Breast epithelium (tissue), 4 donors: ENCODE measurements at regions of chr10 and their contacts with region 1.

Region 1: GRCh38 chr10:44206127-44206818 is 178.6 kb downstream of the CXCL12 start:
- DNase-seq: no peak
- H3K4me3 ChIP-seq: no peak overlapping the region
- H3K27ac ChIP-seq: no peak overlapping the region
- H3K4me1 ChIP-seq: no peaks in the 10 kb centered on the region
- H3K27me3 ChIP-seq: no peaks in the 10 kb centered on the region
- CTCF ChIP-seq: no peak
- POLR2A ChIP-seq: no peak

Region 2: GRCh38 chr10:43491855-43492254 is 714.4 kb before region 1 on chr10:
- intact Hi-C with region 1: no loop called
- DNase-seq: no peak
- H3K4me3 ChIP-seq: no peak overlapping the region
- H3K27ac ChIP-seq: no peak overlapping the region
- H3K4me1 ChIP-seq: no peaks in the 10 kb centered on the region
- H3K27me3 ChIP-seq: no peaks in the 10 kb centered on the region
- CTCF ChIP-seq: no peak
- POLR2A ChIP-seq: no peak

Region 3: DNA sequence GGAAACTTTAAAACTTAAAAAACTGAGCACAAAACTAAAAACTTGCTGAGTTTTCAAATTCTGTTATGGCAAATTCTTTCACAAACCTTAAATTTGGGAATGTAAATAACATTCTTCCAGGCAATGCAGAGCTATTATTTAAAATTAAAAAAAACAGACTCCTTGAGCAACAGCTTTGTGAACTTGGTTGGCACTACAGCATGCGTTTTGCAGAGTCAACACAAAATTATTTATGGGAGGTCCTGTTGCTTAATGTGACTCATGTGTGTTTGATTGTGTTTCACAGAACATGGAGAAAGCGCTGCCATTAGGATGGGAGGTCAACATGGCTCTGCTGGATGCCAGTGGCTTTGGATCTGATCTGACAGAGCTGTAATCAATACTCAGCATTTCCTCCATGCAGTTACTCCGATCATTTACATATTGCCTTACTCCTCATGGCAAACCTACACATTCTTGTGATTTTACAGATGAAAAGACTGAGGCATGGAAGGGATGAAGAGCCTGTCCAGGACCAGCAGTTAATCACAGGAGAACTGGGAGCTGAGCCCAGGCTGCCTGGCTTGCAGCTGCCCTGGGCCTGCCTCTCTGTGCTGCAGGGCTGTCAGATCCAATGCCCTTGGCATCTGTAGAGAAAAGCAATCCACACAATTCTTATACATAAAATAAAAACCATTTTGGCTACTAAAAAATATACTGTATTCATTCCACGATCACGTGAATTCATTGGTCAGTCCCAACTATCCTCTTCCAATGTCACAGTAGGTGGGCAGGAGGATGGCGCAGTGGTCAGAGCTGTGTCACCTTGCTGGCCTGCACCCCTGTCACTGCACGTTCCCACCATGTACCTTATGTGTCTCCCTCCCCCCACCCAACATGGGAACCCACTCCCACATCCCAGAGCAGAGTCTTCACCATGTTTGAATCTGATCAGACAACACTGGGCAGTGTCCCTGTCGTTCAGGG is 22.3 kb before region 1 on chr10:
- intact Hi-C with region 1: loop called (anchors 1 kb)
- DNase-seq: no peak
- H3K4me3 ChIP-seq: no peak overlapping the region
- H3K27ac ChIP-seq: no peak overlapping the region
- H3K4me1 ChIP-seq: peaks cover 0 to 4% of the 10 kb centered on the region in 2 donors
- H3K27me3 ChIP-seq: no peaks in the 10 kb centered on the region
- CTCF ChIP-seq: no peak
- POLR2A ChIP-seq: no peak

Region 4: DNA sequence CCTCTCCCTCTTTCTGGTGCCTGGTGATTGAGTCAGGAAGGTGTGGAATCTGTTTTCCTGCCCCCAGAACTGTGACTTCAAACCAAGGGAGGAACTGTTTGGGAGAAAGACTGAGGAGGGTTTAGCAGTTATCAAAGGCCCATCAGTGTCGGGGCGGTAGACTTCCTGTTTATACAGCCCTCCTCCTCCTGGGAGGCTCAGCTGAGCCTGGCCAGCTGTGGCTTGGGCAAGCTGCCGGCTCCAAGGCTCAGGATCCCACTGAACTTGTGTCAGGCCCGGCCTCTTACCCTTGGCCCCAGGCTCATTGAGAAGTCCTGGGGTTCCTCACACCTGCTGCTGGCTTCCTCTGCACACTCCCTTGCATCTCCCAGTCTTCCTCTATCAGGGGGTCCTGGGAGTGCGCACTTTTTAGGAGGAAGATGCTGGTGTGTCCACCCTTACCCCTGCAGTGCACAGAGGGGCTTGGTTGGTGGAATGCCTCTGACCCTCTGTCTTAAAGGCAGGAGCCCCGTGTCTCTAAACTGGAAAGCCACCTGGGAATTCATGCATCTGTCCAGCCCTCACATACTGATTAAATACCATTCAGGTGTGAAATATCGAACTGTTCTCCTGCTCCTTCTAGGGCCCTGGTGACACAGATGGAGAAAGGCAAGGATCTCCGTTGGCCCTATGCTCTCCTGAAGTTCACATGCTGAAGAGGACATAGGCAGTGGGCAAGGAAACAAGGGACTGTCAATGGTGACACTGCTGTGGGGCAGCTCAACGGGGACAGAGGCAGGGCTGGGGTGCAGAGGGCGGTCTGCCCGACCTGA is 146.2 kb after region 1 on chr10:
- intact Hi-C with region 1: no loop called
- DNase-seq: peak in 1 of 2 donors; percentile 31
- H3K4me3 ChIP-seq: no peak overlapping the region
- H3K27ac ChIP-seq: peak overlapping the region in 1 of 2 donors; percentile 5
- H3K4me1 ChIP-seq: no peaks in the 10 kb centered on the region
- H3K27me3 ChIP-seq: no peaks in the 10 kb centered on the region
- CTCF ChIP-seq: no peak
- POLR2A ChIP-seq: no peak

Region 5: DNA sequence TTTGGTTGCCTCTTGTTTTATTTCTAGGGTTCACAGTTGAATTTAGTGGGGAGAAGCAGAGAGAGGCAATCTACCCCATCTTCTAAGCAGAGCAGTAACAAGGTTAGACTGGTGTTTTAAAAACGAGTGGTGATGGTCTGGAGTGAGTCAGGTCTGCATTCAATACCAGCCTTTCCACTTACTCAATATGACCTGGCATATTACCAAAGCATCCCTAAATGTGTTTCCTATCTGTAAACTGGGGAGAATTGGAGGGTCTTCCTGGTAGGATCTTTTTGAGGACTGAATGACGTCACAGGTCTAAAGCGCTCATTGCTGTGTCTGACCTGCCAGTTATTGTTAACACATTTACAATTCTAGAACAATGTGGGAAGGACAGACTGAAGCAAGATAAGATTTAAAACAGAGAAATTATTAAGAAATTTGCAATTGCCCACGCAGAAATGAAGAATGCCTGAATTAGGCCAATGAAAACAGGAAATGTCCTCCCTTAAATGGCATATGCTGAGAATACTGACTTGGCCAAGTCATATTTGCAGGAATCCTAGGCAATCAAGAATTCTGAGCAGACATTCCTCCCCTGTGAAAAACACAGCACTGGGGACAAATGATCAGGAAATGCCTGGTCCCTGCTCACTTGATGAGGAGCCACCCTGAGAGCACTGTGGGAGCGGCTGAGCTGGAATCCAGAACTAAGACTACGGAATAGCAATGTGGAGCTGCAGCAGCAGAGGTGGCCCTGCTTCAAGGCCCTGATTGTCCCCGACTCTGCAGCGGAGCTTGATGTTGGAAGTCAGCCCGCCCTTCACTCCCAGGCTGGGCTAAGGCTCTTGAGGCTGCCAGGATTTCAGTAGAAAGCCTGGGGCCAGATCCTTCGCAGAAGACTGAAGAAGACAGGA is 363.2 kb after region 1 on chr10:
- intact Hi-C with region 1: no loop called
- DNase-seq: no peak
- H3K4me3 ChIP-seq: peak overlapping the region in 1 of 3 donors; percentile 37
- H3K27ac ChIP-seq: peak overlapping the region; percentile 43 to 77
- H3K4me1 ChIP-seq: no peaks in the 10 kb centered on the region
- H3K27me3 ChIP-seq: no peaks in the 10 kb centered on the region
- CTCF ChIP-seq: no peak
- POLR2A ChIP-seq: no peak

Region 6: GRCh38 chr10:46092524-46093081 is 1886.3 kb after region 1 on chr10:
- intact Hi-C with region 1: loop called (anchors 5 kb)
- DNase-seq: no peak
- H3K4me3 ChIP-seq: no peak overlapping the region
- H3K27ac ChIP-seq: no peak overlapping the region
- H3K4me1 ChIP-seq: no peaks in the 10 kb centered on the region
- H3K27me3 ChIP-seq: no peaks in the 10 kb centered on the region
- CTCF ChIP-seq: no peak
- POLR2A ChIP-seq: no peak